ENCODE measurements at regions of chr1 and their contacts with region 1.

Region 1: GRCh38 chr1:206925106-206925736 is 3.5 kb upstream of the FCMR start:
- DNase-seq: peak in 9 of 14 experiments; percentile 41 to 85 (median 56)
- ATAC-seq: no peak
- H3K4me3 ChIP-seq: no peak overlapping the region
- H3K4me3 Mint-ChIP-seq: no peak overlapping the region
- H3K27ac ChIP-seq: peak overlapping the region; percentile 57 to 95
- H3K27ac Mint-ChIP-seq: no peak overlapping the region
- H3K4me1 ChIP-seq: peaks cover 56% of the 10 kb centered on the region
- H3K4me1 Mint-ChIP-seq: peaks cover 40% of the 10 kb centered on the region
- H3K27me3 ChIP-seq: no peaks in the 10 kb centered on the region
- H3K27me3 Mint-ChIP-seq: no peaks in the 10 kb centered on the region
- CTCF ChIP-seq: no peak

Region 2: DNA sequence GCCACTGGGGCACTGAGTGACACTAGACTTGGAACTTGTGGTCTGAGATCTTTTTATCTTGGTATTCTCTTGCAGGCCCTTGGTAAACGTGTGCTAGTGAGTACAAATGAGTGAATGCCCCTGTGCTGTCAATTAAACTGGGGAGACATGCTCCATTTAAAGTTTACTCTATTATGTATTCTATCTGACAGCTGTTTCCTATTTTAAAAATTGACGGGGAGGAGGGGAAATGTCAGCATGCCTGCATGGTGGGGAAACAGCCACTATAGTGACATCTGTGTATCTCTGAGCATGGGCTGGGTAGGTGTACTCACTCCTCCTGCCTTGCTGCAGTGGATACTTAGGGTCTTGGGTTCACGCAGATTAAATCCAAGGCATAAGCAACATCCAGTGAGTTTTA is 513.9 kb before region 1 on chr1:
- CTCF ChIA-PET with region 1: no interaction called
- POLR2A ChIA-PET with region 1: no interaction called
- intact Hi-C with region 1: no loop called
- DNase-seq: no peak
- ATAC-seq: no peak
- H3K4me3 ChIP-seq: no peak overlapping the region
- H3K4me3 Mint-ChIP-seq: no peak overlapping the region
- H3K27ac ChIP-seq: no peak overlapping the region
- H3K27ac Mint-ChIP-seq: no peak overlapping the region
- H3K4me1 ChIP-seq: no peaks in the 10 kb centered on the region
- H3K4me1 Mint-ChIP-seq: no peaks in the 10 kb centered on the region
- H3K27me3 ChIP-seq: no peaks in the 10 kb centered on the region
- H3K27me3 Mint-ChIP-seq: no peaks in the 10 kb centered on the region
- CTCF ChIP-seq: no peak

Region 3: DNA sequence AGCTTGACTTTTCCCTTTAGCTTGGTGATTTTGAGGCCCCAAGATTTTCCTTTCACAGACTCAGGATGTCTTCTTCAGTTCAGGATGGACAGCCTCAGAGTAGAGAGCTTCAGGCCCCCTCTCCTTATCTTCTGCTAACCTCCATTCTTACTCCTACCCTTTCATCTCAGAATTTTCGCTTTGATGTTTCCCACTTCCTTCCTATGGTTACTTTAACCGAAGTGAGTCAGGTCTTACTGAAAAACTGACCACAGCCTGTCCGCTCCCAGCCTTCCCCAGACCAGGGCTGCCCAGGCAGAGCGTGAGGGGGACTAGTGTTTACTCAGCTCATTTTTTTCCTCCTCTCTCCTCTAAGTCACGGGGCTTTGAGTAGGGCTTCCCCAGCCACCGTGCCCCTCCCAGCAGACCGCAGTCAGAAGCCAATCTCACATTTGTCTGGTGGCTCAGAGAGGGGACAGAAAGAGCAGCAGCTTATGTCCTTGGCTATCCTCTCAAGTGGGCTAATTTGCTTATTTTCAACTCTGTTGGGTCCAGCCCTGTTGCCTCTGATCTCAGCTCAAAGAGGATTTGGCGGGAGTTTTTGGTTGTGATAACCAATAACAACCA is 158.9 kb before region 1 on chr1:
- CTCF ChIA-PET with region 1: no interaction called
- POLR2A ChIA-PET with region 1: interaction called, 13 read pairs
- intact Hi-C with region 1: no loop called
- DNase-seq: peak; percentile 48 to 90 (median 66)
- ATAC-seq: peak; percentile 84
- H3K4me3 ChIP-seq: no peak overlapping the region
- H3K4me3 Mint-ChIP-seq: peak overlapping the region; percentile 84
- H3K27ac ChIP-seq: no peak overlapping the region
- H3K27ac Mint-ChIP-seq: peak overlapping the region; percentile 88
- H3K4me1 ChIP-seq: peaks cover 64% of the 10 kb centered on the region
- H3K4me1 Mint-ChIP-seq: peaks cover 74% of the 10 kb centered on the region
- H3K27me3 ChIP-seq: no peaks in the 10 kb centered on the region
- H3K27me3 Mint-ChIP-seq: no peaks in the 10 kb centered on the region
- CTCF ChIP-seq: no peak

Region 4: GRCh38 chr1:206895830-206896242 is 29.4 kb before region 1 on chr1:
- CTCF ChIA-PET with region 1: no interaction called
- POLR2A ChIA-PET with region 1: interaction called, 384 read pairs
- intact Hi-C with region 1: no loop called
- DNase-seq: no peak
- ATAC-seq: no peak
- H3K4me3 ChIP-seq: no peak overlapping the region
- H3K4me3 Mint-ChIP-seq: no peak overlapping the region
- H3K27ac ChIP-seq: no peak overlapping the region
- H3K27ac Mint-ChIP-seq: peak overlapping the region; percentile 5
- H3K4me1 ChIP-seq: peaks cover 34% of the 10 kb centered on the region
- H3K4me1 Mint-ChIP-seq: peaks cover 72% of the 10 kb centered on the region
- H3K27me3 ChIP-seq: no peaks in the 10 kb centered on the region
- H3K27me3 Mint-ChIP-seq: no peaks in the 10 kb centered on the region
- CTCF ChIP-seq: no peak

Region 5: DNA sequence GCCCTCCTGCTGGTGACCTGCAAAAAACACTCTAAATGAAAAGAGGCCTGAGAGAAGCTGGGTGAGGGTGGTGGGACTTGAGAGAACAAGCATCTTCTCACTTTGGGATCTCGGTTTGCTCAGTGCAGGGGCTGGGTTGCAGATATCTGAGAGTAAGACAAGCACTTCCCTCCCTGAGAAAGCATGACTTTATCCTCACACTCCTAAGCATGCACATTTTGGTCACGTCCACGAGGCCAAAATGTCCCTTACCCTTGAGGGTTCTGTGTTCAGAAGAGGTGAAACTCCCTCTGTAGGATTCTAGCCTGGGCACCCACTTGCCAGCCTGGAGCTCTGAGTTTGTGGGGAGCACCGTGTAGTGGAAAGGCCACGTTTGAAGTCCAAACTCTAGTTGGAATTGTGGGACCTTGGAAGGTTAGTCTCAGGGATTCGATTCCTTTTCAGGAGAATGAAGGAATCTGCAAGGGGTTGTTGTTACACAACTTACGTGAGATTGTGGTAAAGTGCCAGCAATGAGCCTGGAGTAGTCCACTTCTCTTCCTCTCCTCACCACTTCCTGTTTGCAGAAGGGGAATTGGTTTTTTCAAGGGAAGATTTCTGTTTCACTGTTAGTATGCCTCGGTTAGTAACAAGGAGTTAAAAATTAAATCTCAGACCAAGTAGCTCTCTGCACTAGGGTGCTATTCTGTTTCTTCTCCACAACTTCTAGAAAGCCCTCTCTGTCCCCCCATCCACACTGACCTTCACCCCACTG is 42.1 kb after region 1 on chr1:
- CTCF ChIA-PET with region 1: no interaction called
- POLR2A ChIA-PET with region 1: interaction called, 12 read pairs
- intact Hi-C with region 1: no loop called
- DNase-seq: peak in 3 of 14 experiments; percentile 32 to 51 (median 45)
- ATAC-seq: peak; percentile 29
- H3K4me3 ChIP-seq: no peak overlapping the region
- H3K4me3 Mint-ChIP-seq: peak overlapping the region; percentile 21
- H3K27ac ChIP-seq: no peak overlapping the region
- H3K27ac Mint-ChIP-seq: no peak overlapping the region
- H3K4me1 ChIP-seq: peaks cover 18% of the 10 kb centered on the region
- H3K4me1 Mint-ChIP-seq: peaks cover 30% of the 10 kb centered on the region
- H3K27me3 ChIP-seq: no peaks in the 10 kb centered on the region
- H3K27me3 Mint-ChIP-seq: no peaks in the 10 kb centered on the region
- CTCF ChIP-seq: no peak

Region 6: DNA sequence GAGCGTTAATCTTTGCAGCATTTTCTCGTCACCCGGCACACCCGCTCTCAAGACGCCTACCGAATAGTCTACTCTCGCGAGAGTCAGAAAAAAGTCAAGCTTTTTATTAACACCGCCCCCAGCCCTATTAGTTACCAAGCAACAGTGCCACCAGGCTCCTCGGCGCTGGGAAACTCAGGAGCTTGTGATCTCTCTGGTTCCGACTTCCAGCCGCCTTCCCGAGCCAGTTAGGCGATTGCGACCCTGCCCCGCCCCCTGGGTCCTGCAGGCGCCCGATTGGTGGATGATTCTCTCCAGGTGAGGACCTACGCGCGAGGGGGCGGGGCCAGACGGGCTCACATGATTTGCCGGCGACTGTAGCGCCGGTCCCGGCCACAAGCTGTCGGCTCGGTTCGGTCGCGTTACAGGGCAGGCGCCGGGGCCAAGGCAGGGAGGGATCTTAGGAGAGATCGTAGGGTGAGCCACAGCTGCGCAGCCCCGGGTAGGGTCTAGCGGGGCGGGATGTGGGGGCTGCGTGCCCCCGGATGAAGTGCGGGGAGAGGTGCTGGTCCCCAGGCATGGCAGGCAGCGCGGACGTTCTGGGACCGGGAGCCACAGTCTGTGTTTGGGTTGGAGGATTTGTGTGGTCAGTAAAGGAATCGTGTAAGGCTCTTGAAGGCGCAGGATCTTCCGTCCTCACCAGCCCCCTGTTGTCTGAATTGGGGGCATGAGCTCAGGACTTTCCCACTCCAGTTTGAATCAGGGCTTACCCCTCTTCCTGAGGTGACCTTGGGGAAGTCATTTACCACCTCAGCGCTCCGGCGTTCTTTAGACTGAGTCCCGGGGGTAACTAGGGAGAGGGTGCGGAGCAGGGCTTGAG is 127.9 kb after region 1 on chr1 and contains the start of gene PFKFB2:
- CTCF ChIA-PET with region 1: no interaction called
- POLR2A ChIA-PET with region 1: interaction called, 4 read pairs
- intact Hi-C with region 1: loop called in 1 of 2 experiments (anchors 2 kb)
- DNase-seq: peak; percentile 85 to 97 (median 94)
- ATAC-seq: peak; percentile 87
- H3K4me3 ChIP-seq: peak within 1 kb of the TSS; percentile 66
- H3K4me3 Mint-ChIP-seq: peak within 1 kb of the TSS; percentile 98
- H3K27ac ChIP-seq: peak within 1 kb of the TSS; percentile 24 to 50
- H3K27ac Mint-ChIP-seq: peak within 1 kb of the TSS; percentile 93
- H3K4me1 ChIP-seq: peaks cover 29% of the 10 kb centered on the region
- H3K4me1 Mint-ChIP-seq: peaks cover 56% of the 10 kb centered on the region
- H3K27me3 ChIP-seq: no peaks in the 10 kb centered on the region
- H3K27me3 Mint-ChIP-seq: no peaks in the 10 kb centered on the region
- CTCF ChIP-seq: no peak
- total RNA-seq, gene PFKFB2: 3.2 to 4.0 TPM